Cardiac septum (tissue), 1 donor: ENCODE measurements at regions of chr6 and their contacts with region 1.

Region 1: GRCh38 chr6:17269840-17270239 is 11.3 kb upstream of the RBM24 start:
- DNase-seq: no peak

Region 2: DNA sequence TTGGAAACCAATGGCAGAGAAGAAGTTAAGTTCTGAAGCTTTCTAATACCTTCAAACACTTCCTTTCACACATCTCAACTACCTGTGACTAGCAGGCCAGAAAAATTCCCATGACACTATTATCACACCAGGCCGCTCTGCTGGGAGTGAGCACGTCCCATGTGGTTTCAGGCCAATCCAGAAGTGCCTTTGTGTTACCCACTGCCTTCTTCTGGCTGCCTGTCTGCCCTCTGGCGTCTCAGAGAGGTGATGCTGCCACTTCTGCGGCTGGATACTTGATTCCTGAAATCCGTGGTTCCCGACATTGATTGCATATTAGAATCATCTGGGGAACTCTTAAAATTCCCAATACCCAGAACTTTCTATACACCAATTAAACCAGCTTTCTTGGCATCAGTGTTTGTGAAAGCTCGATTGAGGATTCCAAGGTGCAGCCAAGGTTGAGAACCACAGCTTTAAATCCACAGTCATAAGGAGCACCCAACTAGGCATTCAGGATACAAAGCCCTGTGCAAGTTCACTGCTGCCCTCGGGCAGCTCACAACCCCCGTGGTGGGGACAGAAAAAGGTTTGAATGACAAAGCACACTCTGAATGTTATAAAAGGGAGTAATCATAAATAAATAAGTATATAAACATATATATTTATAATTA is 102.4 kb before region 1 on chr6:
- intact Hi-C with region 1: loop called (anchors 5 kb)
- DNase-seq: peak; percentile 79

Region 3: DNA sequence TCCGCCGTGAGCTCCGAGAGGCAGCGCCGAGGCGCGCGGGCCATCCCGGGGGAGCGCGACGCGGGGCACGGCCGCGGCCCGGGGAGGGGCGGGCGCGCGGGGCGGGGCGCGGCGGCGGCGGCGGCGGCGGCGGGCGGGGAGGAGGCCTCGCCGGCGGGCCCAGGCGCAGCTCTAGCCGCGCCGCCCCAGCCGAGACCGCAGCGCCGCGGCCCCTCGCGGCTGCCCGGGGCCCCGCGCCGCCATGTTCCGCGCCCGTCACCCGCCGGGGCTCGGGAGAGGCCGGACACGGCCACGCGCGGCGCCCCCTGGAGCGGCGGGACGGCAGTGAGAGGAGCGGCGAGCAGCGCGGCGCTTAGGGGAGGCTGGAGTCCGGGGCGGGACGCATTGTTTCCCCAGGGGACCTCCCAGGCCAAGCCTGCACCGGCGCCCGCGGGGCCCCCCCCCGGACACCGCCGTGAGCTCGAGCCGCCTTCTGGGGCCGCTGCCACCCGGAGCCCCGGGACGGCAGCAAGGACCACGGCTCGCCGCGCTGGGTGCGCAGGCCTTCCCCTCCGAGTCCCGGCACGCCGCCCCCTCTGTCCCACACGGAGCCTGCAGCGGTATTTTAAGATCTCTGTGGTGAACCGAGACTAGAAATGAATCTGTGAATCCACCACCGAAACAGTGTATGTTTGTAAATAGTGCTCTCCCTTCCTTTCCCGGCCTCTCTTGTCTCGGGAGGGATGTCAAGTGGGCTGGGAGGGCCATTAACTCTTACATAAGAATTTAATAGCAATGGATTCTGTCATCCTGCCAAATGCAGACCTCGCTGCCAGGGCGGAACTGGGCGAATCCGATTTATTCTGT is 718.0 kb after region 1 on chr6 and contains the start of gene KIF13A:
- intact Hi-C with region 1: no loop called
- DNase-seq: peak; percentile 85
- total RNA-seq, gene KIF13A: 145 TPM